ENCODE measurements at regions of chr3 and their contacts with region 1.

Region 1: GRCh38 chr3:101902041-101902440 is 52.7 kb downstream of the NFKBIZ start:
- DNase-seq: peak; percentile 96 to 100 (median 97)
- H3K4me3 ChIP-seq: no peak overlapping the region
- H3K4me3 Mint-ChIP-seq: no peak overlapping the region
- H3K27ac ChIP-seq: peak overlapping the region; percentile 30 to 81
- H3K27ac Mint-ChIP-seq: peak overlapping the region; percentile 84 to 98 (median 90)
- H3K4me1 ChIP-seq: peaks cover 40 to 53% of the 10 kb centered on the region in 2 donors
- H3K4me1 Mint-ChIP-seq: peaks cover 37% of the 10 kb centered on the region
- H3K27me3 ChIP-seq: no peaks in the 10 kb centered on the region
- H3K27me3 Mint-ChIP-seq: no peaks in the 10 kb centered on the region
- CTCF ChIP-seq: no peak

Region 2: DNA sequence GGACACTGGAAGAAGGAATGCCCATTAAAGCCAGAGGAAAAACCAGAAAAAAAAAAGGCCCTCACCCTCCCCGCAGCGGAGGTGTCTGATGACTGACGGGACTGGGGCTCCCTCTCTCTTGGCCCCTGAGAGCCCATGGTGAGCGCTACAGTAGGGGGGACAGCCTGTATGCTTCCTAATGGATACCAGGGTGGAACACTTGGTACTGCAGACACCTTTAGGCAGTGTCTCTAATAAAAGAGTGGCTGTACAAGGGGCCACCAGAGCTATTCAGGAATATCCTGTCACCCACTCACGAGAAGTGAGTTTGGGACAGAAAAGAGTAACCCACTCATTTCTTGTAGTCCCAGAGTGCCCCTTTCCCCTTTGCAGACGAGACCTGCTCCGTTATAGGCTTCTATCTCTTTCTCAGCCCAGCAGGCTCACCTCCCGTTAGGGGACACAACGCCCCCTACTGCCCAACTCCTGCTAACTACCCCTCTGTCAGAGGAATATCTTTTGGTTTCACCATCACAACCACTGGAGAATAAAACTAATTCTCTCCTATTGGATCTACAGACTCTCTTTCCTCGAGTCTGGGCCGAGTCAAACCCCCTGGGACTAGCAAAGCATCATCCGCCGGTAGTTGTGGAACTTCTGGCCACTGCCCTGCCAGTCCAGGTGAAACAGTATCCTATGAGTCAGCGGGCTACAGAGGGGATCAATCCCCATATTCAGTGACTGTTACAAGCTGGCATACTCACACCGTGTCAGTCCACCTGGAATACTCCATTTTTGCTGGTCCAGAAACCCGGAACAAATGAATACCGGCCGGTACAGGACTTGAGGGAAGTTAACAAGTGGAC is 265.9 kb before region 1 on chr3:
- intact Hi-C with region 1: no loop called
- DNase-seq: peak in 2 of 3 donors; percentile 4 to 17
- H3K4me3 ChIP-seq: no peak overlapping the region
- H3K4me3 Mint-ChIP-seq: no peak overlapping the region
- H3K27ac ChIP-seq: no peak overlapping the region
- H3K27ac Mint-ChIP-seq: peak overlapping the region in 1 of 7 donors; percentile 38
- H3K4me1 ChIP-seq: no peaks in the 10 kb centered on the region
- H3K4me1 Mint-ChIP-seq: peaks cover 4% of the 10 kb centered on the region
- H3K27me3 ChIP-seq: no peaks in the 10 kb centered on the region
- H3K27me3 Mint-ChIP-seq: peaks cover 0 to 2% (median 2%) of the 10 kb centered on the region in 3 donors
- CTCF ChIP-seq: peak; percentile 71

Region 3: GRCh38 chr3:101819758-101820157 is 82.3 kb before region 1 on chr3:
- intact Hi-C with region 1: no loop called
- DNase-seq: peak; percentile 75 to 92 (median 88)
- H3K4me3 ChIP-seq: peak overlapping the region in 1 of 3 experiments; percentile 12
- H3K4me3 Mint-ChIP-seq: no peak overlapping the region
- H3K27ac ChIP-seq: peak overlapping the region in 1 of 2 donors; percentile 78
- H3K27ac Mint-ChIP-seq: peak overlapping the region; percentile 72 to 91 (median 88)
- H3K4me1 ChIP-seq: peaks cover 15 to 36% of the 10 kb centered on the region in 2 donors
- H3K4me1 Mint-ChIP-seq: peaks cover 36% of the 10 kb centered on the region
- H3K27me3 ChIP-seq: no peaks in the 10 kb centered on the region
- H3K27me3 Mint-ChIP-seq: peaks cover 0 to 2% (median 0%) of the 10 kb centered on the region in 3 donors
- CTCF ChIP-seq: no peak

Region 4: DNA sequence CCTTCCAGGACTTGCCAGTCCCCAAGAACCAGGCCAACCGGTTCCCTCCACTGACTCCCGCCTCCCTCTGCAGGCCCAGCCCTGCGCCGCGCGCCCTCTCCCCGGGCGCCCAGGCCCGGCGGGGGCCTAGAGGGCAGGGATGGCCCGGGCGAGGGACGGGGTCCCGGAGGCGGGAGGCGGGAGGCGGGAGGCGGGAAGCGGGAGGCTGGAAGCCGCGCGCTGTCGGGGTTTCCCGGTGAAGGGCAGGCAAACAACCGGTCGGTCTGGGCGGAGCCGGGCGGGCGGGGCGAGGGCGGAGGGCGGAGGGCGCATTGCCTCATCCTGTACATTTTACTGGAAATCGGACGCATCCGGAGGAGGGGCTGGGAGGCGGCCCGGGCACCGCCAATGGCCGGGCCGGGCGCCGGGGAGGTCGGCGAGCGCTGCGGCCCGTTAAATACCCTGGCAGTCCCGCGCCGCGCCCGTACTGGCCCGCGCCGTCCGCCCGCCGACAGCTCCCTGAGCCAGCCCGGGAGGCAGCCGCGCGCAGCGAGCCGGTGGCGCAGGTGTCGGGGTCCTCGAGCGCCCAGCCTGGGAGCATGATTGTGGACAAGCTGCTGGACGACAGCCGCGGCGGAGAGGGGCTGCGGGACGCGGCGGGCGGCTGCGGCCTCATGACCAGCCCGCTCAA is 52.9 kb before region 1 on chr3 and contains the start of gene NFKBIZ:
- intact Hi-C with region 1: loop called in 1 of 2 experiments (anchors 5 kb)
- DNase-seq: peak; percentile 92 to 97 (median 95)
- H3K4me3 ChIP-seq: peak within 1 kb of the TSS; percentile 61 to 100 (median 98)
- H3K4me3 Mint-ChIP-seq: peak within 1 kb of the TSS; percentile 96
- H3K27ac ChIP-seq: peak within 1 kb of the TSS; percentile 85 to 96
- H3K27ac Mint-ChIP-seq: peak within 1 kb of the TSS; percentile 94 to 99 (median 98)
- H3K4me1 ChIP-seq: peaks cover 41 to 56% of the 10 kb centered on the region in 2 donors
- H3K4me1 Mint-ChIP-seq: peaks cover 52% of the 10 kb centered on the region
- H3K27me3 ChIP-seq: no peaks in the 10 kb centered on the region
- H3K27me3 Mint-ChIP-seq: no peaks in the 10 kb centered on the region
- CTCF ChIP-seq: no peak
- polyA plus RNA-seq, gene NFKBIZ: 71.0 to 592 (median 84.9) TPM

Region 5: DNA sequence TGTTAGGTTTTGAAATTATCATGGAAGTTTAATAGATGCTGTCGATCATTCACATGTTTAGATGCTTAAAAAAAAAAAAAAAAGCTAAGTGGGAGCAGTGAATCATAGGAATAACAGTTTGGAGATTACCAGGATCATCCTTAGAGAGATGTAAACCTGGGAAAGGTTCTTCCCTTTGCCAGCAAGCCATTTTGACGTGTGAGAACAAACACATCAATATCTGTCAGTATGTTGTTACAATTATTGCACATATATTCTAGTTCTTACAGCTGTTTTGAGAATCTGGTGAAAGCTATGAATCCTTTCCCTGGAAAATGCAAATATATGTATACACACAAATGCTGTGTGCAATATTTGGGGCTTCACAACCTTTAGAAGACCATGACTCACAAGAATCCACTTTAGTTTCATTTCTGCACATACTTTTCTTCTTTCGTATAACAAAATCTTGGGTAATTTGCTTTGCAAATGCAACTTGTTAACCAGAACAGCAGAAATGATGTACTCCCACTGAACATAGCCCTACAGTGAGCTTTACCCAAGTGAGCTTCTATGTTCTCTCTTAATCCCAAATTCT is 40.7 kb before region 1 on chr3:
- intact Hi-C with region 1: loop called in 1 of 2 experiments (anchors 5 kb)
- DNase-seq: peak in 1 of 3 donors; percentile 58
- H3K4me3 ChIP-seq: no peak overlapping the region
- H3K4me3 Mint-ChIP-seq: no peak overlapping the region
- H3K27ac ChIP-seq: peak overlapping the region in 1 of 2 donors; percentile 47
- H3K27ac Mint-ChIP-seq: peak overlapping the region; percentile 4 to 80 (median 59)
- H3K4me1 ChIP-seq: peaks cover 4 to 29% of the 10 kb centered on the region in 2 donors
- H3K4me1 Mint-ChIP-seq: peaks cover 32% of the 10 kb centered on the region
- H3K27me3 ChIP-seq: no peaks in the 10 kb centered on the region
- H3K27me3 Mint-ChIP-seq: no peaks in the 10 kb centered on the region
- CTCF ChIP-seq: no peak

Region 6: GRCh38 chr3:102038477-102039142 is 136.6 kb after region 1 on chr3:
- intact Hi-C with region 1: loop called in 1 of 2 experiments (anchors 10 kb)
- DNase-seq: peak; percentile 33 to 70 (median 58)
- H3K4me3 ChIP-seq: peak overlapping the region in 1 of 3 experiments; percentile 4
- H3K4me3 Mint-ChIP-seq: peak overlapping the region in 1 of 2 donors; percentile 55
- H3K27ac ChIP-seq: peak overlapping the region in 1 of 2 donors; percentile 48
- H3K27ac Mint-ChIP-seq: peak overlapping the region; percentile 72 to 93 (median 89)
- H3K4me1 ChIP-seq: peaks cover 14 to 27% of the 10 kb centered on the region in 2 donors
- H3K4me1 Mint-ChIP-seq: peaks cover 20% of the 10 kb centered on the region
- H3K27me3 ChIP-seq: no peaks in the 10 kb centered on the region
- H3K27me3 Mint-ChIP-seq: peaks cover 0 to 3% (median 0%) of the 10 kb centered on the region in 3 donors
- CTCF ChIP-seq: no peak

Measured in CD14-positive monocyte (primary cell).